ENCODE measurements at regions of chr11 and their contacts with region 1.

Region 1: GRCh38 chr11:128884703-128885338 is 6.3 kb upstream of the KCNJ5 start:
- DNase-seq: peak in 4 of 5 donors; percentile 41 to 67 (median 59)
- H3K4me3 ChIP-seq: no peak overlapping the region
- H3K4me3 Mint-ChIP-seq: no peak overlapping the region
- H3K27ac ChIP-seq: no peak overlapping the region
- H3K27ac Mint-ChIP-seq: no peak overlapping the region
- H3K4me1 ChIP-seq: peaks cover under 1% of the 10 kb centered on the region
- H3K4me1 Mint-ChIP-seq: peaks cover 7 to 8% (median 8%) of the 10 kb centered on the region in 3 donors
- H3K27me3 ChIP-seq: peaks cover 19% of the 10 kb centered on the region
- H3K27me3 Mint-ChIP-seq: peaks cover 32 to 68% of the 10 kb centered on the region in 2 donors

Region 2: DNA sequence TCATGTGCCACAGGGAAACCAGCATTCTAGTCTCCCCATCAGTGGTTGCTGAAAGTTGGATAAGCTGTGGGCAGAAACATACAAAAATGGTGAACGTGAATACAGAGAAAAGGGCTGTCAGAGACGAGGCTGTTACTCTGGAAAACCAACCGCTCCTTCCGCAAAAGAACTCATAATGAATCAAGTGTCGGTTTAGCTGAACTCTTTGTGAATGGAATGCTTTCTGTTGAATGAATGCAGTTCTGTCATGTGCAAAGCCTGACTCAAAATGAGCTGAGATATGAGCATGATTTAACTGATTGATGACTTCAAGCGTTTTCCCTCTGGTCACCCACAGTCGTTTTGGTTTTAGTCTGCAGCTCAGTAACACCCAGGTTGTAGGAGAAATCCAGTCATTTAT is 595.8 kb before region 1 on chr11:
- CTCF ChIA-PET with region 1: no interaction called
- POLR2A ChIA-PET with region 1: no interaction called
- DNase-seq: no peak
- H3K4me3 ChIP-seq: no peak overlapping the region
- H3K4me3 Mint-ChIP-seq: peak overlapping the region in 6 of 7 donors; percentile 32 to 88 (median 49)
- H3K27ac ChIP-seq: no peak overlapping the region
- H3K27ac Mint-ChIP-seq: peak overlapping the region; percentile 98 to 100 (median 99)
- H3K4me1 ChIP-seq: peaks cover 84% of the 10 kb centered on the region
- H3K4me1 Mint-ChIP-seq: peaks cover 89 to 99% (median 98%) of the 10 kb centered on the region in 3 donors
- H3K27me3 ChIP-seq: no peaks in the 10 kb centered on the region
- H3K27me3 Mint-ChIP-seq: no peaks in the 10 kb centered on the region

Region 3: GRCh38 chr11:128790196-128790595 is 94.6 kb before region 1 on chr11:
- CTCF ChIA-PET with region 1: no interaction called
- POLR2A ChIA-PET with region 1: no interaction called
- DNase-seq: no peak
- H3K4me3 ChIP-seq: no peak overlapping the region
- H3K4me3 Mint-ChIP-seq: no peak overlapping the region
- H3K27ac ChIP-seq: no peak overlapping the region
- H3K27ac Mint-ChIP-seq: peak overlapping the region in 3 of 8 donors; percentile 40 to 70 (median 58)
- H3K4me1 ChIP-seq: no peaks in the 10 kb centered on the region
- H3K4me1 Mint-ChIP-seq: peaks cover 30 to 44% (median 41%) of the 10 kb centered on the region in 3 donors
- H3K27me3 ChIP-seq: no peaks in the 10 kb centered on the region
- H3K27me3 Mint-ChIP-seq: no peaks in the 10 kb centered on the region

Region 4: DNA sequence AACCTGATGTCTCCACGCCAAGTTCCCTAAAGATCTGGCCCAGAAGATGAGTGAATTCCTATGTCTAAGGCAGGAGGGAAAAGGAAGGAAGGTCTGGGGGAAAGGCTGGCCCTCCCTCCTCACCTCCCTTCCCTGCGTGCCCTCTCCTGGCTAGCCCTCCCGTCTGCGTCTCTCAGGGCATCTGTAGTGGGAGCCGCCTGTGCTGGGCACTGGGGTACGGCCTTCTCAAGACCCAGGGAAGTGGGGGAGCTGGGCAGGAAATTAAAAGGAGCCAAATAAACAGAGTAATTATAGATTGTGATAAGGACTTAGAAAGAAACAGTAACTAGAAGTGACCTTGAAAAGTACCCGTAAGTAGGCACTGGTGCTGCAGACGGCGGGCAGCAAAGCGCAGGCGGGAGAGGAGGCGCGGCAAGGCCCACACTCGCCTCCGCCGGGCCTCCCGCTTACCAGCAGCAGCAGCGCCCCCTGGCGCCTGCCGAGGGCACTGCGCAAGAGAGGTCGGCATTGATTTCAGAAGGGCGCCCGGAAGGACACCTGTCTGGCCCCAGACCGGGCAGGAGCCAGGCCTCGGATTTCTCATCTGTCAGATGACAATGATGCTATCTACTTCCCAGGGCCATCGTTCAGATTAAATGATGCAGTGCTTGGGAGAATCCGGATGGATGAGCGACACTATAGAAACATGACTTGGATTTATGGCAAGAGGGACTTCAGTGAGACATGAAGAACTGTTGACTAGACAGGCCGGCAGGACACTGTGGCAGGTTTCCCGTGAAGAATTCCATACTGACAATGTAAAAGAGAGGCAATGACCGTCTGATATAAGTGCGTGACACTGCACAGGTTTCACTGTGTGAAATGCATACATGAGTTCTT is 25.0 kb before region 1 on chr11:
- CTCF ChIA-PET with region 1: no interaction called
- POLR2A ChIA-PET with region 1: no interaction called
- DNase-seq: peak; percentile 55 to 82 (median 66)
- H3K4me3 ChIP-seq: no peak overlapping the region
- H3K4me3 Mint-ChIP-seq: peak overlapping the region in 1 of 7 donors; percentile 33
- H3K27ac ChIP-seq: no peak overlapping the region
- H3K27ac Mint-ChIP-seq: peak overlapping the region in 1 of 8 donors; percentile 17
- H3K4me1 ChIP-seq: no peaks in the 10 kb centered on the region
- H3K4me1 Mint-ChIP-seq: peaks cover 3 to 9% (median 8%) of the 10 kb centered on the region in 3 donors
- H3K27me3 ChIP-seq: no peaks in the 10 kb centered on the region
- H3K27me3 Mint-ChIP-seq: peaks cover 4 to 7% of the 10 kb centered on the region in 2 donors

Region 5: GRCh38 chr11:128874427-128874826 is 10.4 kb before region 1 on chr11:
- CTCF ChIA-PET with region 1: interaction called, 11 read pairs
- POLR2A ChIA-PET with region 1: no interaction called
- DNase-seq: no peak
- H3K4me3 ChIP-seq: no peak overlapping the region
- H3K4me3 Mint-ChIP-seq: no peak overlapping the region
- H3K27ac ChIP-seq: no peak overlapping the region
- H3K27ac Mint-ChIP-seq: no peak overlapping the region
- H3K4me1 ChIP-seq: no peaks in the 10 kb centered on the region
- H3K4me1 Mint-ChIP-seq: peaks cover 0 to 5% (median 0%) of the 10 kb centered on the region in 3 donors
- H3K27me3 ChIP-seq: peaks cover 3% of the 10 kb centered on the region
- H3K27me3 Mint-ChIP-seq: peaks cover 6 to 17% of the 10 kb centered on the region in 2 donors

Region 6: GRCh38 chr11:128905345-128906184 is 20.7 kb after region 1 on chr11:
- CTCF ChIA-PET with region 1: interaction called, 43 read pairs
- POLR2A ChIA-PET with region 1: interaction called, 4 read pairs
- DNase-seq: peak in 4 of 5 donors; percentile 3 to 56 (median 36)
- H3K4me3 ChIP-seq: peak overlapping the region; percentile 50
- H3K4me3 Mint-ChIP-seq: peak overlapping the region; percentile 81 to 88 (median 85)
- H3K27ac ChIP-seq: no peak overlapping the region
- H3K27ac Mint-ChIP-seq: peak overlapping the region in 3 of 8 donors; percentile 33 to 58 (median 42)
- H3K4me1 ChIP-seq: peaks cover 5% of the 10 kb centered on the region
- H3K4me1 Mint-ChIP-seq: peaks cover 13 to 29% (median 17%) of the 10 kb centered on the region in 3 donors
- H3K27me3 ChIP-seq: peaks cover 16% of the 10 kb centered on the region
- H3K27me3 Mint-ChIP-seq: peaks cover 24 to 31% of the 10 kb centered on the region in 2 donors

Region 7: GRCh38 chr11:128948589-128948988 is 63.8 kb after region 1 on chr11:
- CTCF ChIA-PET with region 1: interaction called, 14 read pairs
- POLR2A ChIA-PET with region 1: no interaction called
- DNase-seq: no peak
- H3K4me3 ChIP-seq: no peak overlapping the region
- H3K4me3 Mint-ChIP-seq: no peak overlapping the region
- H3K27ac ChIP-seq: no peak overlapping the region
- H3K27ac Mint-ChIP-seq: no peak overlapping the region
- H3K4me1 ChIP-seq: no peaks in the 10 kb centered on the region
- H3K4me1 Mint-ChIP-seq: no peaks in the 10 kb centered on the region
- H3K27me3 ChIP-seq: no peaks in the 10 kb centered on the region
- H3K27me3 Mint-ChIP-seq: peaks cover 7 to 29% of the 10 kb centered on the region in 2 donors

Region 8: GRCh38 chr11:128956401-128957201 is 71.8 kb after region 1 on chr11:
- CTCF ChIA-PET with region 1: interaction called, 53 read pairs
- POLR2A ChIA-PET with region 1: interaction called, 3 read pairs
- DNase-seq: peak in 2 of 5 donors; percentile 23 to 37
- H3K4me3 ChIP-seq: no peak overlapping the region
- H3K4me3 Mint-ChIP-seq: no peak overlapping the region
- H3K27ac ChIP-seq: no peak overlapping the region
- H3K27ac Mint-ChIP-seq: peak overlapping the region in 2 of 8 donors; percentile 27 to 29
- H3K4me1 ChIP-seq: no peaks in the 10 kb centered on the region
- H3K4me1 Mint-ChIP-seq: peaks cover 0 to 4% (median 0%) of the 10 kb centered on the region in 3 donors
- H3K27me3 ChIP-seq: no peaks in the 10 kb centered on the region
- H3K27me3 Mint-ChIP-seq: peaks cover 5 to 25% of the 10 kb centered on the region in 2 donors

Region 9: DNA sequence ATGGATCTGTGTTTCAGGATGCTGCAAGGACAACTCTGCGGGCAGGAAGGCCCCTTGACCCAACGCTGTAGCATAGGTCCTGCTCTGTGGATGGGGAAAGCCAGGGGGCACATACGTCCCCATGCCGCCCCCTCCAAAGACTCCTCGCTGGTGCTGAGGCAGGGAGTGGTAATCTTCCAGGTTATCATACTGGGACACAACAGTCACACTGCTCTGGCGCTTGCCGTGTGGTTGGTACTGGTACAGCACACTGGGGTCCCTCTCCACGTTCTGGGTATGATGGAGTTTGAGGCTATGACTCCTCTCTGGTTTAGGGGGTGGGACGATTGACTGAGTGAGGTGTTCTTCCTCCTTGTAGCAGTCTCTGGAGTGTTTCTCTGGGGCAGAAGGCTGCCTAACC is 84.1 kb after region 1 on chr11:
- CTCF ChIA-PET with region 1: no interaction called
- POLR2A ChIA-PET with region 1: no interaction called
- DNase-seq: no peak
- H3K4me3 ChIP-seq: no peak overlapping the region
- H3K4me3 Mint-ChIP-seq: no peak overlapping the region
- H3K27ac ChIP-seq: no peak overlapping the region
- H3K27ac Mint-ChIP-seq: no peak overlapping the region
- H3K4me1 ChIP-seq: no peaks in the 10 kb centered on the region
- H3K4me1 Mint-ChIP-seq: peaks cover 19 to 31% (median 28%) of the 10 kb centered on the region in 3 donors
- H3K27me3 ChIP-seq: no peaks in the 10 kb centered on the region
- H3K27me3 Mint-ChIP-seq: peaks cover 0 to 7% of the 10 kb centered on the region in 2 donors

Measured in CD8-positive, alpha-beta memory T cell (primary cell).